Calu3 (cell line): ENCODE measurements at regions of chr16 and their contacts with region 1.

Region 1: GRCh38 chr16:35706901-35707300 is 2247.5 kb downstream of the TP53TG3F start:
- DNase-seq: no peak
- H3K4me3 Mint-ChIP-seq: no peak overlapping the region
- H3K27ac Mint-ChIP-seq: no peak overlapping the region
- H3K4me1 Mint-ChIP-seq: no peaks in the 10 kb centered on the region
- H3K27me3 Mint-ChIP-seq: no peaks in the 10 kb centered on the region
- CTCF ChIP-seq: no peak

Region 2: GRCh38 chr16:35651841-35652240 is 55.1 kb before region 1 on chr16:
- CTCF ChIA-PET with region 1: no interaction called
- intact Hi-C with region 1: loop called (anchors 10 kb)
- DNase-seq: no peak
- H3K4me3 Mint-ChIP-seq: no peak overlapping the region
- H3K27ac Mint-ChIP-seq: no peak overlapping the region
- H3K4me1 Mint-ChIP-seq: no peaks in the 10 kb centered on the region
- H3K27me3 Mint-ChIP-seq: no peaks in the 10 kb centered on the region
- CTCF ChIP-seq: no peak

Region 3: DNA sequence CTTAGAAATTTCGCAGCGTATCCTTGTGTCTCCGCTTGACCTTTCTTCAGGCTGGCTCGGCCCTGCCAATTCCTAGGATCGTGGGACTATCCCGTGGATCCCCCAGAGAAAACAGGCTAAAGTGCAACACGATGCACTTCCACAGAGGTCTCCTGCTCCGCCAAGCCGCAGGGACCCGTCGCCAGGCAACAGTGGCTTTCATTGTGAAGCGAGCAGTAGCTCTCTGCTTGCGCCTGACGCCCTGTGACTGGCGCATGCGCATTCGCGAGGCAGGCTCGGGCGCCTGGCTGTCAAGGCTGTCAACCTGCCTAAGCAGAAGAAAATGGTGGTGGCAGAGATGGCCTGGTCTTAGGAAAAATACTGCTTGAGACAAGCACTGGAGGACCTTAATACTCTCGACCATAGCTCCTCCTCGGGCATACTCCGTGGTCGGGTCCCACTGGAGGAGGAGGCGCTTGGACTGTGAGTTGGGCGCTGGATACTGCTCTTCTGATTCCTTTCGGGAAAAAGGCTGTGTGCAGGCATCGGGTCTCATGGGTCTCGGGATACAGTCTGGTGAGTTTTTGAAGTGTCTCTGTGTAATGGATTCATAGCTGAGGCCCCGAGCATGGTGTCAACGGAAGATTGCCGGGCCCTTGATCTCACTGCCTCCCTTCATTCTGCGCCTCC is 88.6 kb after region 1 on chr16:
- CTCF ChIA-PET with region 1: no interaction called
- intact Hi-C with region 1: loop called (anchors 10 kb)
- DNase-seq: no peak
- H3K4me3 Mint-ChIP-seq: no peak overlapping the region
- H3K27ac Mint-ChIP-seq: no peak overlapping the region
- H3K4me1 Mint-ChIP-seq: no peaks in the 10 kb centered on the region
- H3K27me3 Mint-ChIP-seq: no peaks in the 10 kb centered on the region
- CTCF ChIP-seq: no peak

Region 4: GRCh38 chr16:35881654-35882053 is 174.8 kb after region 1 on chr16:
- CTCF ChIA-PET with region 1: no interaction called
- intact Hi-C with region 1: no loop called
- DNase-seq: no peak
- H3K4me3 Mint-ChIP-seq: no peak overlapping the region
- H3K27ac Mint-ChIP-seq: no peak overlapping the region
- H3K4me1 Mint-ChIP-seq: no peaks in the 10 kb centered on the region
- H3K27me3 Mint-ChIP-seq: no peaks in the 10 kb centered on the region
- CTCF ChIP-seq: no peak